Activated CD4-positive, alpha-beta memory T cell treated with anti-CD3 and anti-CD28 coated beads, Interleukin-2, amount 10 ng/mL, durations not matched to agents 7 days and 5 days (primary cell): ENCODE measurements at regions of chrX and their contacts with region 1.

Region 1: GRCh38 chrX:20515841-20516461 is 249.2 kb upstream of the RPS6KA3 start:
- DNase-seq: peak; percentile 51
- H3K4me3 Mint-ChIP-seq: peak overlapping the region; percentile 32
- H3K27ac Mint-ChIP-seq: peak overlapping the region; percentile 98
- H3K4me1 Mint-ChIP-seq: peaks cover 46% of the 10 kb centered on the region
- H3K27me3 Mint-ChIP-seq: peaks cover 16% of the 10 kb centered on the region

Region 2: DNA sequence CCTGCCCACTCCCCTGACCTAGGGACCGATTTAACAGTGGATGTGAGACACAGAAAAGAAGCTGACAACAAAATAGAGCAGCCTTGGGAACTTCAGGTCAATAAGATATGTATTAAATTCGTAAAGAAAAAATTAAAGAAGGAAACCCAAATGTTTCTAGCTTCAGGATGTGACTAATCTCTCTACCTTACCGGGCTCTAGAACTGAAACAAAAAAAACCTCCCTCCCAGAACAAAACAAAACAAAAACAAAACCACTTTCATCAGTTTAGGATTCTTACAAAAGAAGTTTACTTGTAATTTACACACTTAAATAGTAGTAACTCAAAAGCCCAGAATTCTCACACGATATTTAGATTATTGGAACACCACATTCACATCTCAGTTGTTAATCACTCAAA is 63.5 kb before region 1 on chrX:
- CTCF ChIA-PET with region 1: no interaction called
- POLR2A ChIA-PET with region 1: interaction called, 15 read pairs
- DNase-seq: no peak
- H3K4me3 Mint-ChIP-seq: peak overlapping the region; percentile 22
- H3K27ac Mint-ChIP-seq: peak overlapping the region; percentile 91
- H3K4me1 Mint-ChIP-seq: peaks cover 51% of the 10 kb centered on the region
- H3K27me3 Mint-ChIP-seq: peaks cover 4% of the 10 kb centered on the region

Region 3: GRCh38 chrX:20538974-20539373 is 23.0 kb after region 1 on chrX:
- CTCF ChIA-PET with region 1: no interaction called
- POLR2A ChIA-PET with region 1: no interaction called
- DNase-seq: no peak
- H3K4me3 Mint-ChIP-seq: no peak overlapping the region
- H3K27ac Mint-ChIP-seq: no peak overlapping the region
- H3K4me1 Mint-ChIP-seq: no peaks in the 10 kb centered on the region
- H3K27me3 Mint-ChIP-seq: peaks cover 14% of the 10 kb centered on the region

Region 4: GRCh38 chrX:20594985-20595384 is 79.0 kb after region 1 on chrX:
- CTCF ChIA-PET with region 1: no interaction called
- POLR2A ChIA-PET with region 1: no interaction called
- DNase-seq: no peak
- H3K4me3 Mint-ChIP-seq: no peak overlapping the region
- H3K27ac Mint-ChIP-seq: no peak overlapping the region
- H3K4me1 Mint-ChIP-seq: peaks cover 21% of the 10 kb centered on the region
- H3K27me3 Mint-ChIP-seq: no peaks in the 10 kb centered on the region